Pancreas (tissue), 10 donors: ENCODE measurements at regions of chr17 and their contacts with region 1.

Region 1: DNA sequence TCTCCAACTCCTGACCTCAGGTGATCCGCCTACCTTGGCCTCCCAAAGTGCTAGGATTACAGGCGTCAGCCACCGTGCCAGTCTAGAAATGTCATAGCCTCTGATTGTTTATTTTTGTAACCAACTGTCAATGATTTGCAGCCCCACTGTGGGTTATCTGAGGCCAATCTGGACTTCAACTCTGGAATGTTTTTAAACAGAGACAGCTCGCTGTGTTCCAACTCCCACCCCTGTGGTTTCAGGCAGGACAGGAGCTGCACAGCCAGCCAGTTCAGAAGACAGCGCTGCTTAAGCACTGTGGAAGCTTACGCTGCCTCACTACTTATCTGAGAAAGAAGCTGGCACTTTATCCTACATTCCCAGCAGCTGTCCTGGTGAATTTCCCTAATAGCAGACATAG is 19.5 kb downstream of the MRM3 start:
- DNase-seq: peak in 2 of 6 donors; percentile 52 to 57
- ATAC-seq: peak; percentile 41 to 63 (median 56)
- H3K4me3 ChIP-seq: no peak overlapping the region
- H3K27ac ChIP-seq: peak overlapping the region; percentile 61 to 89 (median 70)
- H3K4me1 ChIP-seq: peaks cover 0 to 3% (median 0%) of the 10 kb centered on the region in 3 donors
- H3K27me3 ChIP-seq: no peaks in the 10 kb centered on the region
- CTCF ChIP-seq: no peak

Region 2: GRCh38 chr17:693791-694638 is 107.6 kb before region 1 on chr17:
- intact Hi-C with region 1: no loop called
- DNase-seq: no peak
- ATAC-seq: peak in 1 of 4 donors; percentile 32
- H3K4me3 ChIP-seq: no peak overlapping the region
- H3K27ac ChIP-seq: no peak overlapping the region
- H3K4me1 ChIP-seq: no peaks in the 10 kb centered on the region
- H3K27me3 ChIP-seq: no peaks in the 10 kb centered on the region
- CTCF ChIP-seq: no peak

Region 3: DNA sequence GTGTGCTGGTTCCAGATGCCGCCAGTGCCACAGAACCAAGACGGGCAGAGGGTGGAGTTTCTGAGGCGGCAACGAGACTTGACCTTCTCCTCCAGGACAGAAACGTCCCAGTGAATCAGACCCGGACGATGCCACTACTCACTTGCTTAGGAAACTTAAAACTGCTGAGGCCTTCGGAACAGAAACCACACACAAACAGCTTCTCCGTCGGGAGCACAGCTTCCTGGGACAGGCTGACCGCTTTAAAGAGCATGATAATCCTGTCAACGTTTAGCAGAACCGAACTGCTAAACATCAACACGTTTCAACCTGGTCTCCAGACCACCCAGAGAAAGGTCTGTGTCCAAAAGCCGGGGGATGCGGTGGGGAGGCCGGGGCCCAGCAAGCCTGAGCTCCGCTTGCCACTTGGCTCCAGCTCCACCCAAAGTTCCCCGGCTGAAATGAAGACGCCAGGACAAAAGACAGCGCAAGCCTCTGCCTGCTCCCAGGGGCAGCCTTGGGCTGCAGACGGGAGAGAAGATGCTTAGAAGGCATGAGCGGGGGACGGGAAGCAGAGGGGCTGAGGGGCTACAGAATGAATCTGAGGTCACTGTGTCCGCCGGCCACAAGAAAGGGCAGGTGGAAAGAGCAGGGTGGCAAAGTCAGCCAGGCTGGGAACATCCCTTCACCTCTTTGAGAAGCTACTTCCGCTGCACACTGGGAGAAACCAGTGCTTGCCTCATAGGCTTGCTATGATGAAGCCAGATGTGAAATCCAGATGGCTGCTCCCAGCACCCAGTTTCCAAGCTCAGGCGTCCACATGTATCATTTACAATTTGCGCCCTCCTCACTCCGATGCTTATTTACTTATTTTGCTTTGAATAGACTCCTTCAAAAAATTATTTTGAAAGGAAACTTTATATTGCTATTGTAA is 49.4 kb after region 1 on chr17:
- intact Hi-C with region 1: no loop called
- DNase-seq: no peak
- ATAC-seq: no peak
- H3K4me3 ChIP-seq: no peak overlapping the region
- H3K27ac ChIP-seq: no peak overlapping the region
- H3K4me1 ChIP-seq: peaks cover 0 to 7% (median 0%) of the 10 kb centered on the region in 3 donors
- H3K27me3 ChIP-seq: no peaks in the 10 kb centered on the region
- CTCF ChIP-seq: no peak

Region 4: DNA sequence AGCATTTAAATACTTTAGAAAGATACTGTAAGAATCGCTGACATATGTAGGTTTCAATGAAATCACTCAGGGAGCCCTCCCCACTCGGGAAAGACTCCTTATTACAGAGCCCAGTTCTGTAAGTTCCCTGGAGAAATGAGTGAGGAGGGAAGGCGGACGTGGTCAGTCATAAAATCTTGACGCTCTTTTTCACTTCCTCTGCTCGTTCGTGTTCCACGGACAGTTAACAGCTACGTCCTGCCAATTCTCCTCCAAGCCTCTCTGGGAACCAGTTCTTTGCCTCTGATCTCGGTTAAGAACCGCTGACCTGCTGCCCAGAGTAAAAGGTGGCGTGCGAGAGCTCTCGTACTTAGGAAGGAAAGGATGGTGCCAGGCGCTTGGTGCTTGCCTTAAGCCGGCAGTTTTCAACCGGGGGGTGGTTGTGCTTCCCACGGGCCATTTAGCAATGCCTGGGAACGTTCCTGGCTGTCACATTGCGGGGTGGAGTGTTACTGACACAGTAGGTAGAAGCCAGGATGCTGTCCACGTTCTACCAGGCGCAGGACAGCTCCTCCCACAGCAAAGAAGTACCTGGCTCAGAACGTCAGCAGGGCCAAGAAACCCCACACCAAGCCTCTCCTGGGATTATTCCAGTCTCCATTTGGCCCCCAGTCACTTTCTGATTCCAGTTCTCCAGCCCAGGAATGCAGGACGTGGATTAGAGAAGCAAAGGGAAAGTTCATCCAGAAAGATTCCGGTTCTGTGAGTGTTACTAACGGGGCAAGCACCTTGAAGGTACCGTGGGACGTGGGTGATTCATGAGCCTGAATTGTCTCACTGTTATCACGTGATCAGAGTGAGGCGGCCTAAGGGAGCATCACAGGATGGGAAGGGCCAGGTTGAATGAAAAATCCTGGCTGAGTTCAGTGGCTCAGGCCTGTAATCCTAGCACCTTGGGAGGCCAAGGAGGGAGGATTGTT is 68.2 kb after region 1 on chr17:
- intact Hi-C with region 1: loop called in 2 of 3 experiments (anchors 10 kb)
- DNase-seq: no peak
- ATAC-seq: peak in 1 of 4 donors; percentile 6
- H3K4me3 ChIP-seq: no peak overlapping the region
- H3K27ac ChIP-seq: peak overlapping the region in 2 of 4 donors; percentile 26 to 27
- H3K4me1 ChIP-seq: peaks cover 0 to under 1% (median 0%) of the 10 kb centered on the region in 3 donors
- H3K27me3 ChIP-seq: no peaks in the 10 kb centered on the region
- CTCF ChIP-seq: no peak